SK-N-SH (cell line): ENCODE measurements at regions of chr14 and their contacts with region 1.

Region 1: DNA sequence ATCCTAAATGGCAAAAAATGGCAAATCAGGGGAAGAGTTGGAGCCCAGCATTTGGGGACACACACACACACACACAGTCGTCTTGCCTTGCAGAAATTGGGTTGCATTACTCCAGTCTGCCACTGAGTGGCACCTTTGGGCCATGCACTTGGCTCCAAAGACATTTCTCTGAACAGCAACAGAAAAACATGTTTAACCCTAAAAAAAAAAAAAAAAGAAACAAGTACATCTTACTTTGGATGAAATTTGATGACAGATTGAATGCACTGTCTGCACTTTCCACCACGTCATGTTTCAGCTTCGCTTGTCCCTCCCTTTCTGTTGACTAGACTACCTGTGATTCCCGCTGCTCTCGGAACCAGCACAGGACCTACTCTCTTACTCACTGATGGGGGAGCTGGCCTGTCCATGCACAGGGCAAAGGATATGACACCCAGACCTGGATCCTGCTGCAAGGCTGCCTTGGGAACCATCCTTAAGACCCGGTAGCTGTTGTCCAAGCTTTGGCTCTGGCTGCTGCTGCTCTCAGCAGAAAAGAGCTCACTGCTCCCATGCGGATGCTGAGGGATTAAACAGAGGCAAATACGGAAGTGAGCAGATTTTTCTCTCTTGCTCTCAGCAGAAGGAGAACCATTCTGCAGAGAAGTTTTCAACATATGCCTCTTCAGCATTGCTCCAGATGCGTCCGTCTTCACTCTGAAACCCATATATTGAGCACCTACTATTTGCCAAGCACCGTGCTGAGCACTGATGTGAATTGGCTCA is 376.8 kb downstream of the DPF3 start:
- DNase-seq: peak; percentile 48
- H3K4me3 ChIP-seq: no peak overlapping the region; a peak in 1 of 4 replicates
- H3K27ac ChIP-seq: no peak overlapping the region
- H3K4me1 ChIP-seq: peaks cover 0 to 7% of the 10 kb centered on the region in 2 experiments; a peak in 1 of 4 replicates
- H3K27me3 ChIP-seq: no peaks in the 10 kb centered on the region; the same call in 1 of the 2 replicates
- CTCF ChIP-seq: peak; percentile 92
- EP300 ChIP-seq: no peak
- RAD21 ChIP-seq: peak; percentile 98

Region 2: GRCh38 chr14:72270147-72270731 is 246.9 kb before region 1 on chr14:
- CTCF ChIA-PET with region 1: no interaction called
- POLR2A ChIA-PET with region 1: no interaction called
- DNase-seq: no peak
- H3K4me3 ChIP-seq: no peak overlapping the region
- H3K27ac ChIP-seq: no peak overlapping the region
- H3K4me1 ChIP-seq: no peaks in the 10 kb centered on the region
- H3K27me3 ChIP-seq: peaks cover 18% of the 10 kb centered on the region; the same call in 1 of the 2 replicates
- CTCF ChIP-seq: no peak
- EP300 ChIP-seq: no peak
- RAD21 ChIP-seq: no peak

Region 3: DNA sequence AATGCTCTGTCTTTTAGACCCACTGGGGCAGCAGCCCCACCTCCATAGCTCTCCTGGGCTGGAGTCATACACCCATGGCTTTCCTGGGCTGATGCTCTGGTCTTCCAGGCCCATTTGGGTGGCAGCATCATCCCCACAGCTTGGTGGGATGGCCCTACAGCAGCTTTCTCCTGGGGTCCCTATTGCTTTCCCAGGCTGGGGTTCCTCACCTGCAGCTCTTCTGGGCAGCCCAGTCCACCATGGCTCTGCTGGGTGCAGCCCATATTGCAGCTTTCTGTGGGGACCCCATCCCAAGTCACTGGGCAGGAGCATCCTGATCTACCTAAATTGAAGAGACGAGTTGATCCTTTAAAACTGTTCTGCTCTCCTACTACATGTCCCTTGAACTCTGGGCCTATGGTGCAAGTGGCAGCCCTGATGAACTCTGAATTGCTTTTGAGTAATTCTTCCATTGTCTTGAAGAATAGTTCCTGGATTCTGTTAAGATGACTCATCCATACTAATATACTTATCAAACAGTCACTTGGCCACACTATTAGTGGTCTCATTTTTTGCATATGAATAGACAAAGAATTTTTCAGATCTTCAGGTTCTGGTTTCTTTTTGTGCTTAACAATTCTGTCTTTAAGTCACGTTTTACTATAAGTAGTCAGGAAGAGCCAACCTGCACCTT is 13.3 kb before region 1 on chr14:
- CTCF ChIA-PET with region 1: interaction called, 23 read pairs
- POLR2A ChIA-PET with region 1: no interaction called
- DNase-seq: no peak
- H3K4me3 ChIP-seq: no peak overlapping the region
- H3K27ac ChIP-seq: no peak overlapping the region
- H3K4me1 ChIP-seq: peaks cover 0 to 5% of the 10 kb centered on the region in 2 experiments; a peak in 1 of 4 replicates
- H3K27me3 ChIP-seq: peaks cover 13% of the 10 kb centered on the region; the same call in 1 of the 2 replicates
- CTCF ChIP-seq: no peak
- EP300 ChIP-seq: no peak
- RAD21 ChIP-seq: no peak

Region 4: GRCh38 chr14:72554994-72555604 is 38.0 kb after region 1 on chr14:
- CTCF ChIA-PET with region 1: interaction called, 37 read pairs
- POLR2A ChIA-PET with region 1: no interaction called
- DNase-seq: no peak
- H3K4me3 ChIP-seq: no peak overlapping the region
- H3K27ac ChIP-seq: no peak overlapping the region
- H3K4me1 ChIP-seq: peaks cover 0 to 20% of the 10 kb centered on the region in 2 experiments; a peak in 1 of 4 replicates
- H3K27me3 ChIP-seq: no peaks in the 10 kb centered on the region
- CTCF ChIP-seq: 0 out of 2 replicates have a peak, but pooled peaks have one; percentile 8
- EP300 ChIP-seq: no peak
- RAD21 ChIP-seq: peak; percentile 26

Region 5: DNA sequence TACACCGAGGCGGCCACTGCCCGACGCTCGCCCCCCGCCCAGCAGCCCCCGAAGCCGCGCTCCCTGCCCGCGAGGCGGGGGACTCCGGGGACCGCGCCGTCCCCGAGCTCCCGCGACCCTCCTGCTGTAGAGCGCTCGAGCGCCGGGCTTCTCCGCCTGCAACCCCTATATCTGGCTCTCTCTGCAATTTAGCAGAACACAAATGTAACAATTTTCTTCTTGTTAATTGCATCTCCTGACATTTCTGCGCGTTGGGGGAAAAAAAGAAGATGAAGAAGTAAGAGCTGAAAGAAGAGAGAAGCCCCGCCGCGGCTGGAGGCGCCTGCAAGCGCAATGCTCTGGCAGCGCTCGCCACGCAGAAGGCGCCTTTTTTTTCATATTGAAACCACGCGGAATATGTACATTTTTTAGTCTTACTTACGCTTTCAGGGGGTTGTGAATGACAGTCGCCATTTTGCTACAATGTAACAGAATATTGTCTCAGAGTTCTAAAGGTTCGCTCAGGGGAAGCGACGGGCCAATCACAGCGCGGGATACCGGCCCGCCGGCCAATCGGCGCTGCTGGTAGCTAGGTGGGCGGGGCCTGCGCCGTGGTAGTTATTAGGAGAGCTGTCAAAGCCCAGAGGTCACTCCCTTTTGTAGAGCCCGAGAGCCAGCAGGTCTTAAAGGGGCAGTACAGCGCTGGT is 376.7 kb after region 1 on chr14 and contains the start of gene DPF3:
- CTCF ChIA-PET with region 1: interaction called, 339 read pairs
- POLR2A ChIA-PET with region 1: no interaction called
- DNase-seq: peak; percentile 95
- H3K4me3 ChIP-seq: peak within 1 kb of the TSS; percentile 80 to 99
- H3K27ac ChIP-seq: peak within 1 kb of the TSS in 1 of 2 experiments; percentile 69; a peak in 1 of 4 replicates
- H3K4me1 ChIP-seq: peaks cover 15 to 26% of the 10 kb centered on the region in 2 experiments; a peak in 3 of 4 replicates
- H3K27me3 ChIP-seq: peaks cover 17% of the 10 kb centered on the region
- CTCF ChIP-seq: no peak
- EP300 ChIP-seq: no peak
- RAD21 ChIP-seq: no peak
- polyA plus RNA-seq, gene DPF3: 2.8 and 4.1 TPM in 2 replicates

Region 6: GRCh38 chr14:72920015-72920414 is 402.9 kb after region 1 on chr14:
- CTCF ChIA-PET with region 1: interaction called, 18 read pairs
- POLR2A ChIA-PET with region 1: no interaction called
- DNase-seq: no peak
- H3K4me3 ChIP-seq: no peak overlapping the region
- H3K27ac ChIP-seq: no peak overlapping the region
- H3K4me1 ChIP-seq: peaks cover 0 to 4% of the 10 kb centered on the region in 2 experiments; a peak in 1 of 4 replicates
- H3K27me3 ChIP-seq: no peaks in the 10 kb centered on the region
- CTCF ChIP-seq: peak; percentile 21; the same call in 1 of the 2 replicates
- EP300 ChIP-seq: no peak
- RAD21 ChIP-seq: no peak

Region 7: GRCh38 chr14:72942782-72943333 is 425.7 kb after region 1 on chr14:
- CTCF ChIA-PET with region 1: interaction called, 269 read pairs
- POLR2A ChIA-PET with region 1: no interaction called
- DNase-seq: no peak
- H3K4me3 ChIP-seq: no peak overlapping the region
- H3K27ac ChIP-seq: no peak overlapping the region
- H3K4me1 ChIP-seq: no peaks in the 10 kb centered on the region
- H3K27me3 ChIP-seq: no peaks in the 10 kb centered on the region
- CTCF ChIP-seq: no peak
- EP300 ChIP-seq: no peak
- RAD21 ChIP-seq: peak; percentile 27

Region 8: GRCh38 chr14:72957213-72957612 is 440.1 kb after region 1 on chr14:
- CTCF ChIA-PET with region 1: interaction called, 269 read pairs
- POLR2A ChIA-PET with region 1: no interaction called
- DNase-seq: no peak
- H3K4me3 ChIP-seq: no peak overlapping the region
- H3K27ac ChIP-seq: no peak overlapping the region
- H3K4me1 ChIP-seq: no peaks in the 10 kb centered on the region
- H3K27me3 ChIP-seq: no peaks in the 10 kb centered on the region
- CTCF ChIP-seq: no peak
- EP300 ChIP-seq: no peak
- RAD21 ChIP-seq: no peak